ENCODE measurements at regions of chr19 and their contacts with region 1.

Region 1: DNA sequence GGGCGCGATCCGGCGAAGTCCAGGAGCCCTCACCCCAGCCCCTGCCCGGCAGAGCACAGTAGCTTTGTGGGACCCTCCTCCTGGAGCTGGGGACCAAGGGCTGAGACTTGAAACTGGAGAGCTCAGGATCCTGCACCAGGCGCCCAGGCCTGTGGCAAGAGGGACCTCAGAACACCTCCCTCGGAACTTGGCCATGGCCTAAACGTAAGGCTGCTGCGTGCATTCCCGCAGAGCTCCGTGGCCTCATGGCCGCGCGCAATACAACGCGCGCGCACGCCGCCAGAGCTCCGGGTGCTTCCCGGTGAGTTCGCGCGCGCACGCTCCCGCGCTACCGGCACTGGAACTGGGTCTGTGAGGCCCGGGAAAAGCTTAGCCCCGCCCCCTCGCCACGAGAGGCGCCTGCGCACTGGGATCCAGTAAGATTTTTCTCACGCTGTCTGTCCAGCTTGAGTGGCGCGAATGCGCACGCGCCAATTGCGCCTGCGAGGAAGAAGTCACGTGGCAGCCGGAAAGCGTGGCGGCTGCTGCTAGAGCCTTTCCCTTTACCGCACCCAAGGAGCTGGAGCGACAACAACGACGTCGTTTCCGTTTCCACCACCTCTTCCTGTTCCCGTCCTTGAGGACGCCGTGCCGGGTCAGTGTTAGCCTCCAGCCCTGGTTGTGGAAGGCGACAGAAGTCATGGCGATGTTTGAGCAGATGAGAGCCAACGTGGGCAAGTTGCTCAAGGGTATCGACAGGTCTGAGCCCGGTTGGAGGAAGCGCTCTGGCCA is at the start of gene EIF3K:
- DNase-seq: peak; percentile 99
- H3K4me3 Mint-ChIP-seq: peak within 1 kb of the TSS; percentile 96
- H3K27ac Mint-ChIP-seq: peak within 1 kb of the TSS; percentile 92
- H3K4me1 Mint-ChIP-seq: peaks cover 33% of the 10 kb centered on the region
- H3K27me3 Mint-ChIP-seq: no peaks in the 10 kb centered on the region
- total RNA-seq, gene EIF3K: 285 and 287 TPM in 2 replicates

Region 2: GRCh38 chr19:38070573-38070972 is 548.2 kb before region 1 on chr19:
- intact Hi-C with region 1: no loop called
- DNase-seq: no peak
- H3K4me3 Mint-ChIP-seq: no peak overlapping the region
- H3K27ac Mint-ChIP-seq: no peak overlapping the region
- H3K4me1 Mint-ChIP-seq: no peaks in the 10 kb centered on the region
- H3K27me3 Mint-ChIP-seq: no peaks in the 10 kb centered on the region

Region 3: DNA sequence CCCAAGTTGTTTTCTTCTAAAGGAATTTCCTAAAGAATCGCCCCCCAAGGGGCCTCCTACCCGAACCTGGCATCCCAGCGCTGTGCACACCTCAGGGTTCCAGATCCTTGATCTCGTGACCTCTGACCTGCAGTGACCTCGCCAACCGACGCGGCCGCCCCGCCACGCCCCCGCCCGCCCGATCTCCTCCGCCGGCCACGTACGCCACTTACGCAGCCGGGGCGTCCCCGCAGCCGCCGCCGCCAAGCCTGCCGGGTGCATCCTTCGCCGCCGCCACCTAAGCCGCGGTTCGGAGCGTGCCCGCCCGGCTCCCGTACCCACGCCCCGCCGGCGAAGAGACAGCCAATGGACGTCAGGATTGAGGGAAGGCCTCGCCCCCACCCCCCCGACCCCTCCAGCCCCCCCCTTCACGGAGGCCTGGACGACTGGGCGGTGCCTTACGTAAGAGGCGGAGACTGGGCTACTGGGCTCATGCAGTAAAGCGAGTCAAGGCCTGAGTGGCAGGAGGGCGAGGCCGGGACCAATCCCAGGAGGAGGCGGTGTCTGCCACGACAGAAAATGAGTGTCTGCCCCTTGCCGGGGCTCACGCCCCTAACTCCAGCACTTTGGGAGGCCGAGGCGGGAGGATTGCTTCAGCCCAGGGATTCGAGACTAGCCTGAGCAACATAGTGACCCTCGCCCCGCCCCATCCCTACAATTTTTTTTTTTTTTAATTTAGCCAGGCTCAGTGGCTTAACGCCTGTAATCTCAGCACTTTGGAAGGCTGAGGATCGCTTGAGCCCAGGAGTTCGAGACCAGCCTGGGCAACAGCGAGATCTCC is 302.9 kb before region 1 on chr19 and contains the start of gene YIF1B:
- intact Hi-C with region 1: loop called (anchors 5 kb)
- DNase-seq: peak; percentile 94
- H3K4me3 Mint-ChIP-seq: peak within 1 kb of the TSS; percentile 93
- H3K27ac Mint-ChIP-seq: peak within 1 kb of the TSS; percentile 90
- H3K4me1 Mint-ChIP-seq: peaks cover 41% of the 10 kb centered on the region
- H3K27me3 Mint-ChIP-seq: no peaks in the 10 kb centered on the region
- total RNA-seq, gene YIF1B: 106 and 114 TPM in 2 replicates

Region 4: DNA sequence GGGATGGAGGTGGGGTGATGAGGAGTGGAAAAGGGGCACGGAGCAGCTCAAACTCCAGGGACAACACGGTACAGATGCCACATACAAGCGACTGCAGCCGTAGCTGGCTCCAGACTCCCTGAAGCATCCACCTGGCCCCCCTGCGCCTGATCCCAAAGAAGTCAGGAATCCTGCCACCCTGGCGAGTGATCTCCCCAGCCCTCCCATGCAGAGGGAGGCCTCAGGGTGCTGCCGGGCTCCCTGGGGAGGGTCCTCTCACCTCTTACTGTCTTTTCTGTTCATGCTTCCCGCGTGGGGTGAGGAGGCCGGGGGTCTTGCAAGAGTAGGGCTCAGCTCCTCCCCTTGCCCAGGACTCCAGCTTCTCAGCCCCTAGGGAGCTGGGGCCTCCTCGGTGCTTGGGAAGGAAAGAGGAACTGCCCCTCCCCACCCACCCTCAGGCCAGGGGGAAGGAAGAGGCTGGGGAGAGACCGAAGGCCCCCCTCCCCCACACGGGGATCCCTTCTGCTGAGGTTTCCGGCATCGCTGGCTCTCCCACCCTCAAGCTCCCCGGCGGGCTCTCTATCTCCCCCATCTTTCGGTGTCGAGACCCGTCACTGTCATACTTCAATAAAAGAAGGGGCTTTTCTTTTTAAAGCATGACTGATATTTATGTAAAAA is 192.8 kb before region 1 on chr19 and contains the start of gene RASGRP4:
- intact Hi-C with region 1: loop called (anchors 5 kb)
- DNase-seq: peak; percentile 46
- H3K4me3 Mint-ChIP-seq: peak within 1 kb of the TSS; percentile 75
- H3K27ac Mint-ChIP-seq: peak within 1 kb of the TSS; percentile 95
- H3K4me1 Mint-ChIP-seq: peaks cover 28% of the 10 kb centered on the region
- H3K27me3 Mint-ChIP-seq: no peaks in the 10 kb centered on the region
- total RNA-seq, gene RASGRP4: 17.6 and 20.0 TPM in 2 replicates

Region 5: DNA sequence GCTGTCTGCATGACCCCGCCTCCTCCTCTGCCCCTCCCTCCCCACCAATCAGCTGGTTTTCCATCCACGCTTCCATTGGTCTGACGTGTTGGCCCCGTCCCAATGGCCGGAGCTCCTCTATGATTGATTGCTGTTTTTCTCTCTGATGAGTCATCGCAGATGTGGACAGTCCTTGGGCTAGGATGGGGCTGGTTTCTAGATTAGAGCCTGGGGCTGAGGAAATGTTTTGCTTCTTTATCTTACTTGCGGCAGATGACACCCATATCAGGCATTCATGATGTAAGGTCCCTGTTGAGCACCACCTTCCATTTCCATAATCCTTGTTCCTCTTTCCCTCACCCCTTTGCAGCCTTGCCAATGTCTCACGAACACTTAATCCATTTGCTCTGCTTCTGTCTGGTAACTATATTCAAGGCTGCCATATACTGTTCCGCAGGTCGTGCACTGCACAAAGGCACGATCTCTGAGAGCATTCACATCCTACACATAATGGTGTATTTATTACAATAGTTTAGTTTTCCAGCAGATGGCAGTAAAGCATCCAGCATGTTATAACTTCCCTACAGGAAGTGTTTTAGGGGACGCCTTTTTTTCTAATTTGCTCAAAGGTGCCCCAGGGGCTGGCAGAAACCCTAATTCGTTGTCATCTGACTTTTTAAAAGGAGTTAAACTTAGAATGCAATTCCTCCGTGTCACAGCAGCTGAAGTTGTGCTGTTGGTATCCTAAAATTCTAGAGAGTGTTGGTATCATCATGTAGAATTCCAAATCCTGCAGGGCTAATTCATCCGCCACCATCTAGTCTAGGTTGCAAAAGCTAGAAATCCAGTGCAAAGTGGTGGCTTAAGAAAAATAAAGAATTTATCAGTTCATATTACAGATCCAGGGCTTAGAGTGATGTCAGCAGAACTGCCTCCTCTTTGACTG is 74.5 kb before region 1 on chr19:
- intact Hi-C with region 1: loop called (anchors 1 kb)
- DNase-seq: peak; percentile 19
- H3K4me3 Mint-ChIP-seq: peak overlapping the region; percentile 32
- H3K27ac Mint-ChIP-seq: peak overlapping the region; percentile 69
- H3K4me1 Mint-ChIP-seq: peaks cover 25% of the 10 kb centered on the region
- H3K27me3 Mint-ChIP-seq: no peaks in the 10 kb centered on the region

Region 6: GRCh38 chr19:38559428-38560401 is 59.1 kb before region 1 on chr19:
- intact Hi-C with region 1: loop called (anchors 2 kb)
- DNase-seq: peak; percentile 42
- H3K4me3 Mint-ChIP-seq: peak overlapping the region; percentile 56
- H3K27ac Mint-ChIP-seq: peak overlapping the region; percentile 81
- H3K4me1 Mint-ChIP-seq: peaks cover 43% of the 10 kb centered on the region
- H3K27me3 Mint-ChIP-seq: peaks cover 3% of the 10 kb centered on the region

Region 7: GRCh38 chr19:38655148-38655824 is 36.5 kb after region 1 on chr19:
- intact Hi-C with region 1: loop called (anchors 2 kb)
- DNase-seq: no peak
- H3K4me3 Mint-ChIP-seq: peak overlapping the region; percentile 43
- H3K27ac Mint-ChIP-seq: peak overlapping the region; percentile 62
- H3K4me1 Mint-ChIP-seq: peaks cover 70% of the 10 kb centered on the region
- H3K27me3 Mint-ChIP-seq: no peaks in the 10 kb centered on the region

Region 8: GRCh38 chr19:39623221-39623620 is 1004.4 kb after region 1 on chr19:
- intact Hi-C with region 1: no loop called
- DNase-seq: no peak
- H3K4me3 Mint-ChIP-seq: no peak overlapping the region
- H3K27ac Mint-ChIP-seq: no peak overlapping the region
- H3K4me1 Mint-ChIP-seq: no peaks in the 10 kb centered on the region
- H3K27me3 Mint-ChIP-seq: peaks cover 30% of the 10 kb centered on the region